Aorta (tissue), 5 donors: ENCODE measurements at regions of chrX and their contacts with region 1.

Region 1: GRCh38 chrX:136953867-136954787 is 73.6 kb upstream of the RBMX start:
- DNase-seq: peak; percentile 73 to 80
- ATAC-seq: peak; percentile 72
- H3K4me3 ChIP-seq: no peak overlapping the region
- H3K27ac ChIP-seq: no peak overlapping the region
- H3K4me1 ChIP-seq: no peaks in the 10 kb centered on the region
- H3K27me3 ChIP-seq: no peaks in the 10 kb centered on the region

Region 2: GRCh38 chrX:136227948-136228838 is 725.9 kb before region 1 on chrX:
- intact Hi-C with region 1: no loop called
- DNase-seq: no peak
- ATAC-seq: no peak
- H3K4me3 ChIP-seq: no peak overlapping the region
- H3K27ac ChIP-seq: no peak overlapping the region
- H3K4me1 ChIP-seq: no peaks in the 10 kb centered on the region
- H3K27me3 ChIP-seq: peaks cover 0 to 4% of the 10 kb centered on the region in 2 donors

Region 3: GRCh38 chrX:137031517-137032340 is 77.6 kb after region 1 on chrX:
- intact Hi-C with region 1: no loop called
- DNase-seq: no peak
- ATAC-seq: peak; percentile 42
- H3K4me3 ChIP-seq: peak overlapping the region in 1 of 2 donors; percentile 44
- H3K27ac ChIP-seq: no peak overlapping the region
- H3K4me1 ChIP-seq: no peaks in the 10 kb centered on the region
- H3K27me3 ChIP-seq: no peaks in the 10 kb centered on the region

Region 4: GRCh38 chrX:137051978-137052642 is 98.0 kb after region 1 on chrX:
- intact Hi-C with region 1: loop called (anchors 5 to 10 kb)
- DNase-seq: peak; percentile 68 to 88
- ATAC-seq: peak; percentile 90
- H3K4me3 ChIP-seq: peak overlapping the region; percentile 33 to 45
- H3K27ac ChIP-seq: no peak overlapping the region
- H3K4me1 ChIP-seq: no peaks in the 10 kb centered on the region
- H3K27me3 ChIP-seq: no peaks in the 10 kb centered on the region